ENCODE measurements at regions of chr16 and their contacts with region 1.

Region 1: GRCh38 chr16:87636072-87636684 is 33.9 kb downstream of the JPH3 start:
- DNase-seq: peak; percentile 86
- ATAC-seq: peak; percentile 90
- H3K4me3 Mint-ChIP-seq: peak overlapping the region; percentile 58
- H3K27ac Mint-ChIP-seq: no peak overlapping the region
- H3K4me1 Mint-ChIP-seq: peaks cover 11% of the 10 kb centered on the region
- H3K27me3 Mint-ChIP-seq: peaks cover 17% of the 10 kb centered on the region

Region 2: DNA sequence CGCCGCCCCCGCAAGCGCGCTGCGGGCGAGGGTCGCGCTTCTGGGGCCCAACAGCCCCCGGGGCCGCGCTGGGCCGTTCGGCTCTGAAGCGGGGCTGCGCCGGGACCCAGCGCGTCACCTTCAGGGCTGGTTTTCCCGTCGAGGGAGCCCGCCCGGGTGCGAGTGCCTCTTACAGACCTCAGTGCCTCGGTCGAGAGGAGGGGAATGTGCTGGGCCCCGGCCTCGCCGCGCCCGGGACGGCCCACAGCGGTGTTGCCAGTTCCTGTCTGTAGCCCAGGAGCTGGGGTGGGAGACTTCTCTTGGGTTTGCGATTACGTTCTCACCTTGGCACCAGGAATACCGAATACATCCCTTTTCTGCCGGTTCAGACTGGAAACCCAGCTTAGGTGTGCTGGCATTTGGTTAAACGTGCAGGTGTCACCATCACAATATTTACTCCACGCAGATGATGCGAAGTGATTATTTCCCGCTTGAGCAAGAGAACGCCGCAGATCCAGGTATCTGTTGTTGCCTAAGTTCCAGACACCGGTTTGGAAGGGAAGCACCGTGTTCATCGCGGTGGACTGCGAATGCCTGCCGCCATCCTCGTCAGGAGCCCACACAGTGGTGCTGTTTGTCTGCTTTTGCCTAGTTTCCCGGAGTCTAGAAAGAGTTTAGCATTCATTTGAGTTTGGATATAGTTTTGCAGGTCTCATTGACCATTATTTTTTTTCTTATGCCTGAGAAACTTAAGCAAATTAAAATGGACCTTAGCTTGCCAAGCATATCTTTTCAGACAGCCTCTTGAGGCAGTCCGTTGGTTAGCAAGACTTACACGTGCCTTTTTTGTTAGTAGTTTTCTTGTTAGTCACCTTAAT is 243.1 kb before region 1 on chr16:
- CTCF ChIA-PET with region 1: interaction called, 14 read pairs
- DNase-seq: peak; percentile 71
- ATAC-seq: no peak
- H3K4me3 Mint-ChIP-seq: peak overlapping the region; percentile 84
- H3K27ac Mint-ChIP-seq: peak overlapping the region; percentile 92
- H3K4me1 Mint-ChIP-seq: peaks cover 45% of the 10 kb centered on the region
- H3K27me3 Mint-ChIP-seq: no peaks in the 10 kb centered on the region

Region 3: GRCh38 chr16:87416826-87417527 is 219.2 kb before region 1 on chr16:
- CTCF ChIA-PET with region 1: interaction called, 21 read pairs
- DNase-seq: no peak
- ATAC-seq: no peak
- H3K4me3 Mint-ChIP-seq: no peak overlapping the region
- H3K27ac Mint-ChIP-seq: no peak overlapping the region
- H3K4me1 Mint-ChIP-seq: no peaks in the 10 kb centered on the region
- H3K27me3 Mint-ChIP-seq: no peaks in the 10 kb centered on the region

Region 4: DNA sequence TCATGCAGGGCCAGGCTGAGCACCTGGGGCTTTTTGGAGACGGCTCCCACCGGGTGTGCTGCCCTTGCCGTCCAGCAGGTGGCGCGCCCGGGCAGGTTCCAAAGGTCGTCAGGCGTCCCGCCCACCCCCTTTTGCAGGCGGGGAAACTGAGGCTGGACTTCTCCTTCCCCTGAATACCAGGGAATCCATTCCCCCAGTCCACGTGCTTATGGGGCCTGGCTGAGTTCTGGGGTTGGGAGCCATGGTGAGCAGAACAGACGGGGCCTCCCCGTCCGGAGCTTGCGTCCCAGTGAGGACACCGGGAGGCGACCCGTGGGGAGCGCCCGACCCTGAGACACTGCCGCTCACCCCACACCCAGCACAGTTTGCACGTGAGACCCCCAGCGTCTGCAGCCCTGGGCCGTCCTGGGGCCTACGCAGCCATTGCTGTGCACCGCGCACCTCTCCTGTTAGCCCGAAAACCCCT is 85.6 kb before region 1 on chr16:
- CTCF ChIA-PET with region 1: interaction called, 10 read pairs
- DNase-seq: peak; percentile 61
- ATAC-seq: peak; percentile 20
- H3K4me3 Mint-ChIP-seq: no peak overlapping the region
- H3K27ac Mint-ChIP-seq: no peak overlapping the region
- H3K4me1 Mint-ChIP-seq: no peaks in the 10 kb centered on the region
- H3K27me3 Mint-ChIP-seq: peaks cover 15% of the 10 kb centered on the region

Region 5: DNA sequence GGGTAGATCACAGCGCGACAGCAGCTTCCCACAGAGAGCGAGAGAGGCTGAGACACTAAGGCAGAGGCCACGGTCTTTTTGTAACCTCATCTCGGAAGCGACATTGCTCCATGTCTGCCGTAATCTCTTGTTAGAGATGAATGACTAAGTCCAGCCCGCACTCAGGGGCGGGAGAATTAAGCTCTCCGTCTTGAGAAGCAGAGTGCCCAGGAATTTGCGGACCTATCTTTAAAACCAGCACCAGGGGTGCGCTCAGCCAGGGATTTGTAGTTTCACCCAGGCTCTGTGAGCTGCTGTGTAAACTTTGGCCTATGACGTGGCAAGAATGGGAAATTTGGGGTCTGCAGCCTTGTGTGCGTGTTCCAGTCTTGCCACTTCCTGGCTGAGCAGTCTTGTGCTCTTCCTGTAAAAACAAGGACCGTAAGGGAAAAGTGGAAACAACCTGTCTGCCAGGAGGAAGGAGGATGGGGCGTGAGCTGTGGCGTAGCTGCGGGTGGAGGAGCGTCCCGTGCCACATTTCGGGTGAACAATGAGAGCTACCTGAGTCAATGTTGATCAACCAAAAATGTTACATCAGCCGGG is 49.9 kb before region 1 on chr16:
- CTCF ChIA-PET with region 1: interaction called, 17 read pairs
- DNase-seq: no peak
- ATAC-seq: no peak
- H3K4me3 Mint-ChIP-seq: no peak overlapping the region
- H3K27ac Mint-ChIP-seq: no peak overlapping the region
- H3K4me1 Mint-ChIP-seq: no peaks in the 10 kb centered on the region
- H3K27me3 Mint-ChIP-seq: peaks cover 47% of the 10 kb centered on the region

Region 6: DNA sequence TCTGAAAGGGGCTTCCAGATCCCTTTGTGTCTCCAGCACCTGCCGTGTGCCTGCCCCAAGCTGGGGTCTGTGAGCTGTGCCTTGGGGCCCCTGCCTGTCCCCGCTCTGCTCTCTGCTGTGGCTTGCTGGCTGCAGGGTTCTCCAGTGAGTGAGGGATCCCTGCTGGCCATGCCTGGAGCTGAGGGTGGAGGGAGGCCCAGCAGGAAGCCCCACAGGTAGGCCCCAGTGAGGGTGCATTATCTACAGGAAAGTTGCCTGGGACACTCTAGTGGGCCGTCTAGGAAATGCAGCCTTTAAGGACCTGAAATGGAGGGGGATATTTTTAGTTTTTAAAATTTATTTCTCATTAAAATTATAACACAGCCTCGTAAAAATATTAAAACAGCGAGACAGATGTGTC is 17.1 kb after region 1 on chr16:
- CTCF ChIA-PET with region 1: interaction called, 13 read pairs
- DNase-seq: no peak
- ATAC-seq: no peak
- H3K4me3 Mint-ChIP-seq: no peak overlapping the region
- H3K27ac Mint-ChIP-seq: no peak overlapping the region
- H3K4me1 Mint-ChIP-seq: peaks cover 3% of the 10 kb centered on the region
- H3K27me3 Mint-ChIP-seq: peaks cover 28% of the 10 kb centered on the region

Region 7: DNA sequence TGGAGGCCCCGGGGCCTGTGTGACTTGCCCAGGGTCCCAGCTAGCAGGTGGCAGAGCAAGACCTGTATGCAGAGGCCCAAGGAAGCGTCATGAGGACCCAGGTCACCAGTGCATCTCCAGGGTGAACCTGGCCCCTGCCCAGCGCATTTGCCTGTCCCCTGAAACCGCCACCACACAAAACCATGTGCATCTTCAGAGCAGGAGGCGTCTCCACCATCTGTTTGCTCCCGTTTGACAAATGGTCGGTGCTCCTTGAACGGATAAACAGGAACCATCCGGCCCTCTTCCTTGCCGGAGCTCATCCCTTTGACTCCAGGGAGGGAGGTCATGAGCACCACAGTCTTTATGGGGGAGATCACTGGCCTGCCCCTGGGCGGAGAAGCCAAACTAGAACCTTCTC is 28.6 kb after region 1 on chr16:
- CTCF ChIA-PET with region 1: no interaction called
- DNase-seq: no peak
- ATAC-seq: no peak
- H3K4me3 Mint-ChIP-seq: no peak overlapping the region
- H3K27ac Mint-ChIP-seq: no peak overlapping the region
- H3K4me1 Mint-ChIP-seq: no peaks in the 10 kb centered on the region
- H3K27me3 Mint-ChIP-seq: peaks cover 10% of the 10 kb centered on the region

Region 8: DNA sequence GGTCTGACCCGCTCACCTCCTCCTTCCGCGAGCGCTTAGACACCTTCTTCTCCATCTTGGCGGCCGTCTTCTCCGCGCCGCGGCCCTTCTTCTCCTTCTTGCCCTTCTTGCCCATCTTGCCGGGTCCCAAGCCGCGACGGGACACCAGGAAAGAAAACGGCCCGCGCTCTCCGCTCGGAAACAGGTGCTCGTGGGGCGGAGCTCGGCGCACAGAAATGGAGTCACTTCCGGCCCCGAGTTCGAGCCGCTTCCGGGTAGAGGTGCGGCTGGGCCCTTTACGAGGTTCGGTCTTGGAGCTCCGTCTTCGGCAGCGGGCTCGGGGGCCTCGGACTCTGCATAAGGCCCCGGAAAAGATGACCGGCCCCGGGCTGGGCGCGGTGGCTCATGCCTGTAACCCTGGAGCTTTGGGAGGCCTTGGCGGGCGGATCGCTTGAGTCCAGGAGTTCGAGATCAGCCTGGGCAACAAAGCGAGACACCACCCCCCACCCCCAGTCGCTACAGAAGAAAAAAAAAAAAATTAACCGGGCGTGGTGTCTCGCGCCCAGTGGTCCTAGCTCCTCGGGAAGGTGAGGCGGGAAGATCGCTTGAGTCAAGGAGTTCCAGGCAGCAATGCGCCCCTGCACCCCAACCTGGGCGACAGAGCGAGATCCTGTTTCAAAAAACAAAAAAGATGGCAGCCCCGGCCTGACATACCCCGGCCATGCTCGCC is 129.8 kb after region 1 on chr16 and contains the start of gene KLHDC4:
- CTCF ChIA-PET with region 1: interaction called, 15 read pairs
- DNase-seq: peak; percentile 94
- ATAC-seq: peak; percentile 83
- H3K4me3 Mint-ChIP-seq: peak within 1 kb of the TSS; percentile 100
- H3K27ac Mint-ChIP-seq: peak within 1 kb of the TSS; percentile 100
- H3K4me1 Mint-ChIP-seq: peaks cover 46% of the 10 kb centered on the region
- H3K27me3 Mint-ChIP-seq: no peaks in the 10 kb centered on the region
- total RNA-seq, gene KLHDC4: 86.0 to 114 TPM

Measured in activated CD8-positive, alpha-beta memory T cell treated with anti-CD3 and anti-CD28 coated beads, Interleukin-2, amount 10 ng/mL, durations not matched to agents 7 days and 5 days (primary cell).